SK-N-SH (cell line): ENCODE measurements at regions of chr2 and their contacts with region 1.

Region 1: DNA sequence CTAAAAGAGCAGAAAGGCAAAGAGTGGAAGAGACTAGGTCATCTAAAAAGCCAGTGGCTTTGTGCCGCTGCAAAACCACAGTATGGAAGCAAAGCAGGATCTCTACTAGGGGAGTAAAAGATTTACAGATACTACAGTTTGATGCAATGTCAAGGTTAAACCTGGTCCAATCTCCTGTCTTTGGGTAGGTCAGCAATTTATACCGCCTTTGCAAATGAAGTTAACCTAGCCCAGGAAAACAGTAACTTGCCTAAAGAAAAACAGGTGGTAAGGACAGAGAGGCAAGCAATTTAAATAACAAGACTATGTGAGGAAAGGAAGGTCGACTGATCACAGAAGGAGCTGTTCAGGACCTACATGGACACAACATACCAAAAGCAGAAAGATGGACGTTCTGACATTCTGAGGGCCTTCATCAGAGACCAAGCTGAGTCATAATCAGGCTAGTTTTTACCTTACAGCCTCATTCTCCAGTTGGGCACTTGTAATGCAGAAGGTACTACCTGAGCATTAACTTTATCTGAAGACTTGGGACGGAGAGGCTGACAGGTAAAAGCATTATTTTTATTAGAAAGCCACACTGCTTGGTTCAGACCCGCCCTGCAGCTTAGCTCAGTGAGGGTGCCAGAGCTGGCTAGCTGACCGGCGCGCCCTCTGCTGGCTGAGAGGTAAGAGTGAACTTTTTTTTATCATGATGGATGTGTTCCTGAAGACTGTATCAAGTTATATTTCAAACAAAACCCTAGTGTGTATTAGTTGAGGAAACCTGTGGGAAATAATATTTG is 15.9 kb downstream of the CDKL4 start:
- DNase-seq: peak; percentile 81
- H3K4me3 ChIP-seq: no peak overlapping the region
- H3K27ac ChIP-seq: no peak overlapping the region
- H3K4me1 ChIP-seq: peaks cover 0 to 2% of the 10 kb centered on the region in 2 experiments; a peak in 1 of 4 replicates
- H3K27me3 ChIP-seq: no peaks in the 10 kb centered on the region
- CTCF ChIP-seq: peak; percentile 99
- EP300 ChIP-seq: no peak
- RAD21 ChIP-seq: peak; percentile 90

Region 2: DNA sequence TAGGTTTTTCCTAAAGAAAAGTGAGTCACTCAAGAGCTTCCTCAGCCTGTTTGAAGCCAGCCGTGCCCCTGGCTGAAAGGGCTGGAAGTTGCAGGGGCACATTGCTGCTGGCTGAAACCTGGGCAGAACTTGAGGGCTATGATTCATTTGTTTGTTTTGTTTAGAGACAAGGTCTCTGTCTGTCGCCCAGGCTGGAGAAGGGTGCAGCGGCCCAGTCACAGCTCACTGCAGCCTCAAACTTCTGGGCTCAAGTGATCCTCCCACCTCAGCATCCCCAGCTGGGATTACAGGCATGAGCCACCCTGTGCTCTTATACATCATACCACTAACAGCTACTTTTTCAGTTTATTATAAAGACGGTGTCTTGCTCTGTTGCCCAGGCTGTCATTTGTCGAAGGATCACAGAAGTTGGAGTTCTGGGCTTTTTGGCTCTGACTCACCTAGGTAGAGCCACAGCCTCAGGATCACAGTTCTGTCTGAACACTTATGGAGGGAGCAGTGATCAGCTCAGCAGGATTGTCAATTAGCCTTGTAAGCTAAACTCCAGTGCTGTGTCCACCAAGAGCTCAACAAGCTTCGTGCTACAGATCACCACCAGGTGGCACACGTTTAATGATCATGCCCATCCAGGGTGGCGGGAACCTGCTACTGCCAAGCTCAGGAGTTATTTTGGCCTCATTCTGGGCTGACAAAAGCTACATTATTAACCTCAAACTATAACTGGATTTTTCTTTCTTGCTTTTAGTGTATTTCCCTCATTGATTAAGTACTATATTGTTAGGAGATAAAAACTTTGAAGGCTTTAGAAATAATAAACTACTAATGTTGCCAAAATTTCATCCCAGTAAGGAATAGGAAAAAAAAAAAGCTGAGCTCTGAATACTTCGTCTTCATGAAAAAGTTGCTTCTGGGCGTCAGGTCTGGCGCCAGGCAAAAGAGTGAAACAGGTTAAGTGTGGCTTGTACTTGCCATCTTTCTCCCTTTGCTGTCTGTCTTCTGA is 280.3 kb before region 1 on chr2:
- CTCF ChIA-PET with region 1: interaction called, 191 read pairs
- POLR2A ChIA-PET with region 1: interaction called, 3 read pairs
- DNase-seq: peak; percentile 84
- H3K4me3 ChIP-seq: no peak overlapping the region; a peak in 1 of 4 replicates
- H3K27ac ChIP-seq: peak overlapping the region in 1 of 2 experiments; percentile 32; a peak in 2 of 4 replicates
- H3K4me1 ChIP-seq: 0 out of 4 replicates have a peak, but pooled peaks cover 0 to 7% of the 10 kb centered on the region in 2 experiments
- H3K27me3 ChIP-seq: no peaks in the 10 kb centered on the region
- CTCF ChIP-seq: peak; percentile 87
- EP300 ChIP-seq: no peak
- RAD21 ChIP-seq: peak; percentile 78

Region 3: GRCh38 chr2:39050109-39050508 is 177.7 kb before region 1 on chr2:
- CTCF ChIA-PET with region 1: interaction called, 300 read pairs
- POLR2A ChIA-PET with region 1: no interaction called
- DNase-seq: no peak
- H3K4me3 ChIP-seq: no peak overlapping the region
- H3K27ac ChIP-seq: no peak overlapping the region
- H3K4me1 ChIP-seq: no peaks in the 10 kb centered on the region
- H3K27me3 ChIP-seq: no peaks in the 10 kb centered on the region
- CTCF ChIP-seq: no peak
- EP300 ChIP-seq: no peak
- RAD21 ChIP-seq: no peak

Region 4: GRCh38 chr2:39080152-39080551 is 147.7 kb before region 1 on chr2:
- CTCF ChIA-PET with region 1: interaction called, 20 read pairs
- POLR2A ChIA-PET with region 1: no interaction called
- DNase-seq: no peak
- H3K4me3 ChIP-seq: no peak overlapping the region
- H3K27ac ChIP-seq: no peak overlapping the region
- H3K4me1 ChIP-seq: no peaks in the 10 kb centered on the region
- H3K27me3 ChIP-seq: no peaks in the 10 kb centered on the region
- CTCF ChIP-seq: no peak
- EP300 ChIP-seq: no peak
- RAD21 ChIP-seq: no peak

Region 5: GRCh38 chr2:39202639-39203369 is 25.0 kb before region 1 on chr2:
- CTCF ChIA-PET with region 1: interaction called, 11 read pairs
- POLR2A ChIA-PET with region 1: no interaction called
- DNase-seq: no peak
- H3K4me3 ChIP-seq: no peak overlapping the region
- H3K27ac ChIP-seq: no peak overlapping the region
- H3K4me1 ChIP-seq: no peaks in the 10 kb centered on the region
- H3K27me3 ChIP-seq: no peaks in the 10 kb centered on the region
- CTCF ChIP-seq: no peak
- EP300 ChIP-seq: no peak
- RAD21 ChIP-seq: no peak

Region 6: DNA sequence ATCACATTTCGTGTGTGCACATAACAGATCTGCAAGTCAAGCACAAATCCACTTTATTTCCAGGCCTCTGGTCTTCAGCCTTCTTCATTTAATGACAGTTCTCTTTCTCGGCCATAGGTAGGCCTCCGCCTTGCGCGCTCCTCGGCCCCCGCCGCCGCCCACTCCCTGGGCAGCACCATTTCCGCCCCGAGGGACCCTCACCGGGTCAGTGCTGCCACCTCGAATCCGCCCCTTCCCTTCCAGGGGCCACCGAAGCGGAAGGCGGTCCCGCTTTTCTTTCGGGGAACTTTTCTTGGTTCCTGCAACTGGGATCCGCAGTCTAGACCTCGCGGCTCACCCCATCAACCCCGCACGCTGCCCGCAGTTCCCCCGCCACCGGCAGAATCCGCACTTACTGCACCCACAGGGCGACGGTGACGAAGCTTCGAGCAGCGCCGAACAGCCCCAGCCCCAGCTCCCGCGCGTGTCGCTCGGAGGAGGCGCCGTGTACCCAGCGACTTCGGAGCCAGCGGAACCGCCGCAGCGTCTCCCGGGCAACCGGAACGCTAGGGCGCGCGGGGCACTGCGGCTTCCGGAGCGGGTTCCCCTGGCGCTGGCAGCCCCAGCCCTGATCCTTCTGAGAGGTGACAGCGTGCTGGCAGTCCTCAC is 15.8 kb after region 1 on chr2 and contains the start of gene CDKL4:
- CTCF ChIA-PET with region 1: interaction called, 18 read pairs
- POLR2A ChIA-PET with region 1: no interaction called
- DNase-seq: peak; percentile 91
- H3K4me3 ChIP-seq: peak within 1 kb of the TSS; percentile 79 to 85
- H3K27ac ChIP-seq: peak within 1 kb of the TSS in 1 of 2 experiments; percentile 56; a peak in 2 of 4 replicates
- H3K4me1 ChIP-seq: peaks cover 0 to 7% of the 10 kb centered on the region in 2 experiments; a peak in 3 of 4 replicates
- H3K27me3 ChIP-seq: no peaks in the 10 kb centered on the region
- CTCF ChIP-seq: no peak
- EP300 ChIP-seq: no peak; a peak in 1 of 4 replicates
- RAD21 ChIP-seq: no peak; the same call in 1 of the 2 replicates
- polyA plus RNA-seq, gene CDKL4: 0.60 and 0.81 TPM in 2 replicates

Region 7: DNA sequence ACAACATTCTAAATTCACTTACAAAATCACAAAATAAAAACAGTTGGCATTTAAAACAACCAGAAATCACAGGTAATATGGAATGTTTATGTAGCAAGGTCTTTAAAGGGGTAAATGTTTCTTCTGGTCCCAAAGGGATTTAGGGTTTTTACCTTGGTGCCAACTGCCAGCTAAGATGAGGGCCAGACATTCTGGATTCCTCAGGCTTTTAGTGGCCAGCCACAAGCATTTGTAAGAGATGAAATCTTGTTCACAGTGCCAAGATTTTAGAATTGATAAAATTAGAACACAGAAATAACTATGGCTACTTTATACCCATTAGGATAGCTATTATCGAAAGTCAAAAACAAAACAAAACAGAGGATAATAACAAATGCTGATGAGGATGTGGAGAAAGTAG is 76.4 kb after region 1 on chr2:
- CTCF ChIA-PET with region 1: no interaction called
- POLR2A ChIA-PET with region 1: no interaction called
- DNase-seq: no peak
- H3K4me3 ChIP-seq: no peak overlapping the region
- H3K27ac ChIP-seq: peak overlapping the region; percentile 19 to 44; a peak in 2 of 4 replicates
- H3K4me1 ChIP-seq: peaks cover 0 to 7% of the 10 kb centered on the region in 2 experiments; a peak in 2 of 4 replicates
- H3K27me3 ChIP-seq: no peaks in the 10 kb centered on the region
- CTCF ChIP-seq: no peak
- EP300 ChIP-seq: peak in 1 of 2 experiments; percentile 80; a peak in 1 of 4 replicates
- RAD21 ChIP-seq: no peak